ENCODE measurements at regions of chr21 and their contacts with region 1.

Region 1: DNA sequence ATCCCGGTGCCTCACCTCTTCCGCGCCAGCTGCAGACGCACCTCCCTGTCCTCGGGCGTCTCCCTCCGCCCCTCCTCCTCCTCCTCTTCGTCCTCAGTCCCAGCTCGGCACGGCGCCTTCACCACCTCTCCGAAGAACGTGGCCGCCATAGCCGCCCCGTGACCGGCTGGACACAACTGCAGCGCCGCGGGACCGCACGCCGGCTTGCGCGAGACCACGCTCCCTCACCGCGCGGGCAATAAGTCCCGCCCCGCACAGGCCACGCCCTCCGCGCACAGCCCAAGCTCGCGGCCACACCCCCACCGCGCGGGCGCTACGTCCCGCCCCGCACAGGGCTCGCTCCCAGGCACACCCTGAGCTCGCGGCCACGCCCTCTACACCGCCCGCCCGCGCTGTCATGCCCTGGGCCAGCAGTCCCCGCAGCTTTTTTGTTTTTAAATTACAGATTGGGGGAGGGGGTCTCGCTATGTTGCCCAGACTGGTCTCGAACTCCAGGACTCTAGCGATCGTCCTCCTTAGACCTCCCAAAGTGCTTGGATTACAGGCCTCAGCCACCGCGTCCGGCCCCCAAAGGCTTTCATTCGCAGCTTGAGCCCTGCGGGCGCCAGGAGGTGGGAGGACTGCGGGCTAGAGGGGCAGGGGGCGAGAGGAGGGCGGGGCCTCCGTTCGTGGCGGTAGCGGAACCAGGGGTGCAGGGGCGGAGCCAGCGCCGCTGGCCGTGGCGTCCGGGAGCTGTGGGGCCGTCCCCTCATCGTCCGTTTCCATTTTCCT is at the start of gene PSMG1:
- DNase-seq: peak; percentile 95
- ATAC-seq: peak; percentile 94
- H3K4me3 Mint-ChIP-seq: peak within 1 kb of the TSS; percentile 97
- H3K27ac Mint-ChIP-seq: peak within 1 kb of the TSS; percentile 98
- H3K4me1 Mint-ChIP-seq: peaks cover 35% of the 10 kb centered on the region
- H3K27me3 Mint-ChIP-seq: no peaks in the 10 kb centered on the region
- total RNA-seq, gene PSMG1: 69.0 to 74.5 TPM

Region 2: GRCh38 chr21:39349211-39350093 is 166.0 kb after region 1 on chr21:
- CTCF ChIA-PET with region 1: no interaction called
- POLR2A ChIA-PET with region 1: interaction called, 24 read pairs
- DNase-seq: peak; percentile 98
- ATAC-seq: peak; percentile 88
- H3K4me3 Mint-ChIP-seq: peak overlapping the region; percentile 98
- H3K27ac Mint-ChIP-seq: peak overlapping the region; percentile 100
- H3K4me1 Mint-ChIP-seq: peaks cover 38% of the 10 kb centered on the region
- H3K27me3 Mint-ChIP-seq: peaks cover 7% of the 10 kb centered on the region

Region 3: DNA sequence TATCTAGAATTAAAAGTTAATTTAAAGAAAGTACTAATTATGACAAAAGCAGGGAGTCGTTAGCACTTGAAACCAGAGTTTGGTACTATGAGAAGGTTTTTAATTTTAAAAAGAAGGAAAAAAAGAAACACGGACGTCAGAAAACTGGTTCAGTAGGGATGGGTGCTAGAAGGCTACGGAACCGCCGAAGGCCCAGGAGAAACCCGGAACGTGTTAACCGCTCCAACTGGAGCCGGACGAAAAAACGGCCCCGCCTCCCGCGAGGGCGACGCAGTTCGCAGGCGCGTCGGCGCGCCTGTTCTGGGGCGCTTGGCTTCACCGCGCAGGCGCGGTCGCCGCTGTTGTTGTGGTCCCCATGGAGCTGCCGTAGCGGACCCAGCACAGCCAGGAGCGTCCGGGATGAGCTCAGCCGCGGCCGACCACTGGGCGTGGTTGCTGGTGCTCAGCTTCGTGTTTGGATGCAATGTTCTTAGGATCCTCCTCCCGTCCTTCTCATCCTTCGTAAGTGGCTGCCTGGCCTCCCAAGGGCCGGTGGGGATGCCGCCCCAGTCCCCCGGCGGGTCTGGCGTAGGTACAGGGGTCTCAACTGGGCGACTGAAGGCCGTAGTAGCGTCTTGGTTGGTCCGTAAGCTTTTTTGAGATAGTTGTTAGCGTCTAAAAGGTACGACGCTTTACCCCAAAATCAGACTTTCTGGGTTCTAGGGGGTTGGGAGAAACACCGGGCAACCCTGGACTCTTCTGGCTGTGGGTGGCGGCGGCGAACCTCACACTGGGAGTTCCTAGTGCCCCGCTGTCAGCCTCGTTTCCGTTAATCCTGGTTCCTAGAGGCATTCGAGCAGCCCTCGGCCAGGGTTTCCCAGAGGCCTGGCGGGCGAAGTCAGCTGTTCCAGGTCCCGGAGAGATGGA is 196.8 kb after region 1 on chr21:
- CTCF ChIA-PET with region 1: interaction called, 3 read pairs
- POLR2A ChIA-PET with region 1: interaction called, 13 read pairs
- DNase-seq: peak; percentile 95
- ATAC-seq: peak; percentile 99
- H3K4me3 Mint-ChIP-seq: peak overlapping the region; percentile 88
- H3K27ac Mint-ChIP-seq: peak overlapping the region; percentile 91
- H3K4me1 Mint-ChIP-seq: peaks cover 22% of the 10 kb centered on the region
- H3K27me3 Mint-ChIP-seq: peaks cover under 1% of the 10 kb centered on the region

Measured in activated CD8-positive, alpha-beta T cell treated with anti-CD3 and anti-CD28 coated beads, Interleukin-2, amount 10 ng/mL, durations not matched to agents 7 days and 5 days (primary cell).